Thyroid gland (tissue), 4 donors: ENCODE measurements at regions of chr9 and their contacts with region 1.

Region 1: GRCh38 chr9:132507746-132508469 is 74.5 kb upstream of the BARHL1 start:
- DNase-seq: peak; percentile 64 to 74
- H3K4me3 ChIP-seq: no peak overlapping the region
- H3K27ac ChIP-seq: no peak overlapping the region
- H3K4me1 ChIP-seq: no peaks in the 10 kb centered on the region
- H3K27me3 ChIP-seq: no peaks in the 10 kb centered on the region
- CTCF ChIP-seq: peak; percentile 57 to 80 (median 70)
- POLR2A ChIP-seq: no peak

Region 2: DNA sequence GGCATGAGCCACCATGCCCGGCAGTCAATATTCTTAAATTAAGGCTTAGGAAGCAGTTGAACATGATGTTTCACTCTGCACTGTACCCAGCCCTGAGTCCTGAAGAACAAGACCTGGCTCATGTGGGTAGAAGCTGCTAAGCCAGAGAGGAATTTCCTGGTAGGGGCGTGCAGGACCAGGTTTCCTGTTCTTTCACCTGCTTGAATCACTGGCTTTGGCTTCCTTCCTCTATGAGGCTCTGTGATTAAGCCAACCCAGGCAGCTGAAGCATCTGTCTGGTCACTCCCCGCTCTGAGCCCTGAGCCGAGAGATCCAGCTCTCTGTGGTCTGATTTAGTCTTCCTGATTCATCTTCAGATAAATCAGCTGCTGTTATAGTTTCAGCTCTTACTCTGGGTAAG is 68.8 kb before region 1 on chr9:
- intact Hi-C with region 1: no loop called
- DNase-seq: no peak
- H3K4me3 ChIP-seq: no peak overlapping the region
- H3K27ac ChIP-seq: no peak overlapping the region
- H3K4me1 ChIP-seq: no peaks in the 10 kb centered on the region
- H3K27me3 ChIP-seq: no peaks in the 10 kb centered on the region
- CTCF ChIP-seq: no peak
- POLR2A ChIP-seq: no peak

Region 3: GRCh38 chr9:132575005-132575609 is 67.2 kb after region 1 on chr9:
- intact Hi-C with region 1: loop called (anchors 2 kb)
- DNase-seq: peak; percentile 76 to 80
- H3K4me3 ChIP-seq: no peak overlapping the region
- H3K27ac ChIP-seq: no peak overlapping the region
- H3K4me1 ChIP-seq: no peaks in the 10 kb centered on the region
- H3K27me3 ChIP-seq: peaks cover 16% of the 10 kb centered on the region
- CTCF ChIP-seq: peak; percentile 41 to 90 (median 79)
- POLR2A ChIP-seq: no peak

Region 4: DNA sequence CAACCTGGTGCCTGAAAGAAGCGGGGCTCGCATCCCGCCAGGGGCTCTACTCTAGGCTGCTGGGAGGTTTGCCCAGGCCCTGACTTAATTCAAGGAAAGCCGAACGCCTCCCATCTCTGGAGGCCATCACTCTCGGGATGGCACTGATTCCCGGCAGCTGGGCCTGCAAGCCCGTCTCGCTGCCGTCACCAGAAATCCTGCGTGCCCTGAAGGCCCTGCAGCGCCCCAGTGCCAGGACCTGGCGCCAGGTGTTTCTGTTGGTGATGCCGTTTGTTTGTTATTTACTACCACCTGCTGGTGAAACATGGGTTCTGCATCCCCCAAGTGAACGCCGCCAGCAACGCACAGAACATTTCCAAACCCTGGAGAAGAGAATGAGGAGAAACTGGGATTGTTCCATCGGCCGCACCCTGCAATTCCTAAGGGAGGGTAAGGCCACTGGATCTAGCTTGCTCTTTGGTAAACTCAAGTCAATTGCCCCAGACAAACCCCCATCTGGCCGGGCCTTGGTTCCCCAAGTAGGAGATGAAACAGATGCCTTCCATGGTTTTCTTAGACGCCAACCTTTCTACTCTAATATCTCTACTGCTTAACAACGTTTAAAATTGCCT is 292.2 kb after region 1 on chr9:
- intact Hi-C with region 1: loop called (anchors 5 kb)
- DNase-seq: peak; percentile 79 to 81
- H3K4me3 ChIP-seq: no peak overlapping the region
- H3K27ac ChIP-seq: no peak overlapping the region
- H3K4me1 ChIP-seq: peaks cover 0 to 5% of the 10 kb centered on the region in 2 donors
- H3K27me3 ChIP-seq: no peaks in the 10 kb centered on the region
- CTCF ChIP-seq: peak; percentile 70 to 92 (median 87)
- POLR2A ChIP-seq: no peak